CD4-positive, alpha-beta memory T cell (primary cell): ENCODE measurements at regions of chr2 and their contacts with region 1.

Region 1: GRCh38 chr2:197499594-197500526 is at the starts of genes HSPD1 and HSPE1:
- DNase-seq: peak; percentile 97 to 98 (median 98)
- H3K4me3 ChIP-seq: peak within 1 kb of the TSS; percentile 86 to 87
- H3K4me3 Mint-ChIP-seq: peak within 1 kb of the TSS; percentile 92 to 99 (median 96)
- H3K27ac ChIP-seq: peak within 1 kb of the TSS; percentile 77
- H3K27ac Mint-ChIP-seq: peak within 1 kb of the TSS; percentile 92 to 98 (median 97)
- H3K4me1 ChIP-seq: peaks cover 70% of the 10 kb centered on the region
- H3K4me1 Mint-ChIP-seq: peaks cover 41 to 77% (median 55%) of the 10 kb centered on the region in 4 donors
- H3K27me3 ChIP-seq: no peaks in the 10 kb centered on the region
- H3K27me3 Mint-ChIP-seq: no peaks in the 10 kb centered on the region
- total RNA-seq, gene HSPD1: 129 to 132 TPM
- total RNA-seq, gene HSPE1: 52.4 to 65.1 TPM

Region 2: GRCh38 chr2:196639180-196640030 is 860.5 kb before region 1 on chr2 and contains the start of gene CCDC150:
- CTCF ChIA-PET with region 1: no interaction called
- POLR2A ChIA-PET with region 1: no interaction called
- intact Hi-C with region 1: loop called (anchors 1 kb)
- DNase-seq: peak; percentile 92 to 94 (median 94)
- H3K4me3 ChIP-seq: peak within 1 kb of the TSS; percentile 69 to 79
- H3K4me3 Mint-ChIP-seq: peak within 1 kb of the TSS; percentile 83 to 93 (median 90)
- H3K27ac ChIP-seq: peak within 1 kb of the TSS; percentile 39
- H3K27ac Mint-ChIP-seq: peak within 1 kb of the TSS; percentile 39 to 87 (median 72)
- H3K4me1 ChIP-seq: peaks cover 9% of the 10 kb centered on the region
- H3K4me1 Mint-ChIP-seq: peaks cover 8 to 20% (median 13%) of the 10 kb centered on the region in 4 donors
- H3K27me3 ChIP-seq: no peaks in the 10 kb centered on the region
- H3K27me3 Mint-ChIP-seq: peaks cover 0 to 4% of the 10 kb centered on the region in 2 donors
- total RNA-seq, gene CCDC150: 0.44 to 0.87 TPM

Region 3: DNA sequence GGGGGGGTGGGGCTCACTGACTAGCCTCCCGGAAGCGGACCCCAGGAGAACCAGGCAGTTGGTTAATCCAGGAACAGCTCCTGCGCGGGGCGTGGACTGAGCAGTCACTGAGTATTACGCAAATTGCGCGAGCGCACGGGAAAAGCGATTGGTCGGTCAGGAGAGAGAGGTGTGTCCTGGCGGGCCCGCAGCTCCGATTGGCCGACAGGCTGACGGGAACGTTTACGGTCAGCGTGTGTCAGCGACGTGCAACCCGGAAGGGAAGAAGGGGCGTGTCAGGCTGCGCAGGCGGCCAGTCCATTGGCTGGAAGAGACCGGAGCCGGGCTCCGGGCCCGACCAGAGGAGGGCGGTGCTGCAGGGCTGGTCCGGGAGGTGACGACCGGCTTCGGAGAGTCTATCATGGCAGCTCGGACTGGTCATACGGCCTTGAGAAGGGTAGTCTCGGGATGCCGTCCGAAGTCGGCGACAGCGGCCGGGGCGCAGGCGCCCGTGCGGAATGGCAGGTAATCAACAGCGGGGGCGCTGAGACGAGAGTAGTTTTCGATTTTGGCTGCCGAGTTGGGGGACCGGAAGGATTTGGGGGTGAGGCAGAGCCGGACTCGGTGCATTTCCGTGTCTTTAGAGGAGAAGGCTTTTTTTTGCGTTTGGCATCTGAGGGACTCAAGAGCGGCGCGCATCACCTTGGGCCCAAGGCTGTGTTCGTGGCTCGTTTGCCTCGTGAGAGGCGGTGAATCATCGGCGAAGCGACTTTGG is 46.5 kb before region 1 on chr2 and contains the start of gene COQ10B:
- CTCF ChIA-PET with region 1: interaction called, 4 read pairs
- POLR2A ChIA-PET with region 1: interaction called, 102 read pairs
- intact Hi-C with region 1: loop called (anchors 1 kb)
- DNase-seq: peak; percentile 97 to 99 (median 99)
- H3K4me3 ChIP-seq: peak within 1 kb of the TSS; percentile 87 to 88
- H3K4me3 Mint-ChIP-seq: peak within 1 kb of the TSS; percentile 96 to 100 (median 99)
- H3K27ac ChIP-seq: peak within 1 kb of the TSS; percentile 99
- H3K27ac Mint-ChIP-seq: peak within 1 kb of the TSS; percentile 99 to 100 (median 100)
- H3K4me1 ChIP-seq: peaks cover 36% of the 10 kb centered on the region
- H3K4me1 Mint-ChIP-seq: peaks cover 28 to 65% (median 41%) of the 10 kb centered on the region in 4 donors
- H3K27me3 ChIP-seq: no peaks in the 10 kb centered on the region
- H3K27me3 Mint-ChIP-seq: peaks cover 2 to 3% of the 10 kb centered on the region in 2 donors
- total RNA-seq, gene COQ10B: 31.7 to 33.1 TPM

Region 4: DNA sequence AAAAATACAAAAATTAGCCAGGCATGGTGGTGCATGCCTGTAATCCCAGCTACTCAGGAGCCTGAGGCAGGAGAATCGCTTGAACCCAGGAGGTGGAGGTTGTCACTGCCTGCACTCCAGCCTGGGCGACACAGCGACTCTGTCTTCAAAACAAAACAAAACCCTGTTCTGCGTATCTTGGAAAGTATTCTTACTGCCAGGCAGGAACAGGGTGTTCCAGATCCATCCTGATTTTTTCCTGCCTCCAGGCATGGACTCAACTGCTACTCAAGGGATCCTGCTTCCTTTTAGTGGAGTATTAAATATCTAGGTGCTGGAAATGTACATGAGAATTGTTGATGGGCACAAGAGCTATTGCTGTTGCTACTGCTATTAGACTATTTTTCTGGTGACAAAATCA is 12.5 kb before region 1 on chr2:
- CTCF ChIA-PET with region 1: no interaction called
- POLR2A ChIA-PET with region 1: interaction called, 13 read pairs
- intact Hi-C with region 1: no loop called
- DNase-seq: no peak
- H3K4me3 ChIP-seq: no peak overlapping the region
- H3K4me3 Mint-ChIP-seq: no peak overlapping the region
- H3K27ac ChIP-seq: no peak overlapping the region
- H3K27ac Mint-ChIP-seq: peak overlapping the region in 2 of 7 donors; percentile 35 to 66
- H3K4me1 ChIP-seq: no peaks in the 10 kb centered on the region
- H3K4me1 Mint-ChIP-seq: peaks cover 0 to 3% (median 0%) of the 10 kb centered on the region in 4 donors
- H3K27me3 ChIP-seq: no peaks in the 10 kb centered on the region
- H3K27me3 Mint-ChIP-seq: no peaks in the 10 kb centered on the region

Region 5: DNA sequence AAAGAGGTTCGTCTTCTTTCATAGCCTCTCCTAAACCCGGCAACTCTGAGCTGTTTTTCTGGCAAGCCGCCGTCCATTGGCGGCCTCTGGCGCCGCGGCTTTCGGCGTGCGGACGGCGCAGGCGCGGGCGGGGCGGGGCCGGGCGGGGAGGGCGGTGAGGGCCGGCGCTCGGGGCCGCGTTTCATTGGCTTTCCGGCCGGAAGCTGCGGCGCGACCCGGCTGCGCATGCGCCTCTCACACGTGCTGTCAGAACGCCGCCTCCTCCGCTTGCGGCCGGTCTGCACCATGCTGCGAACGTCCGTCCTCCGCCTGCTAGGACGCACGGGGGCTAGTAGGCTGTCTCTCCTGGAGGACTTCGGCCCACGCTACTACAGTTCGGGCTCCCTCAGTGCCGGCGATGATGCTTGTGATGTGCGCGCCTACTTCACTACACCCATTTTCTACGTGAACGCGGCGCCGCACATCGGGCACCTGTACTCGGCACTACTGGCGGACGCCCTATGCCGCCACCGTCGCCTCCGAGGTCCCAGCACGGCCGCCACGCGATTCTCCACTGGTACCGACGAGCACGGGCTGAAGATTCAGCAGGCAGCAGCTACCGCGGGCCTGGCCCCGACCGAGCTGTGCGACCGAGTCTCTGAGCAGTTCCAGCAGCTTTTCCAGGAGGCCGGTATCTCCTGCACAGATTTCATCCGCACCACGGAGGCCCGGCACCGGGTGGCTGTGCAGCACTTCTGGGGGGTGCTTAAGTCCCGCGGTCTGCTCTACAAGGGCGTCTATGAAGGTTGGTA is 205.5 kb after region 1 on chr2 and contains the start of gene MARS2:
- CTCF ChIA-PET with region 1: no interaction called
- POLR2A ChIA-PET with region 1: interaction called, 30 read pairs
- intact Hi-C with region 1: loop called (anchors 1 kb)
- DNase-seq: peak; percentile 91 to 94 (median 92)
- H3K4me3 ChIP-seq: peak within 1 kb of the TSS; percentile 89 to 93
- H3K4me3 Mint-ChIP-seq: peak within 1 kb of the TSS; percentile 84 to 94 (median 90)
- H3K27ac ChIP-seq: peak within 1 kb of the TSS; percentile 77
- H3K27ac Mint-ChIP-seq: peak within 1 kb of the TSS; percentile 84 to 98 (median 95)
- H3K4me1 ChIP-seq: peaks cover 51% of the 10 kb centered on the region
- H3K4me1 Mint-ChIP-seq: peaks cover 23 to 54% (median 41%) of the 10 kb centered on the region in 4 donors
- H3K27me3 ChIP-seq: no peaks in the 10 kb centered on the region
- H3K27me3 Mint-ChIP-seq: peaks cover 3 to 5% of the 10 kb centered on the region in 2 donors
- total RNA-seq, gene MARS2: 12.1 to 12.3 TPM